Stomach (tissue), 19 donors: ENCODE measurements at regions of chr13 and their contacts with region 1.

Region 1: DNA sequence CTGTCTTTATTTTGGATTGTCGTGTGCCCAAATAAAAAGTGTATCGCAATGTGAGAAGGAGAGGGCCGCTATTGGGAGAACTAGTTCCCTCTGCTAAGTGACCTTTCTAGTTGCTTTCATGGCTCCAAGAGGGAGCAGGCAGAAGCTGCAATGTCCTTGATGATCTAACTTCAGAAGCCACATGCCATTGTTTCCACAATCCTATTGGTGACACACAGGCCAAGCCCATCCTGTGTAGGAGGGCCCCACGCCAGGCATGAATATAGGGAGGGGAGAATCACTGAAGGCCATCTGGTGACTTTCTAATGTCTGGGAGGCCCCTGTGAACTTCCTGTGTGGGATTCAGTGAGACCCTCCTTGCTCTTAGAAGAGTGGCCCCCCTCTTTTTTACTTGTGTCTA is 47.8 kb upstream of the KPNA3 start:
- DNase-seq: peak in 1 of 2 donors; percentile 17
- H3K4me3 ChIP-seq: no peak overlapping the region
- H3K27ac ChIP-seq: no peak overlapping the region
- H3K4me1 ChIP-seq: no peaks in the 10 kb centered on the region
- H3K27me3 ChIP-seq: no peaks in the 10 kb centered on the region
- CTCF ChIP-seq: no peak
- EP300 ChIP-seq: no peak
- POLR2A ChIP-seq: no peak

Region 2: GRCh38 chr13:49388256-49388655 is 452.0 kb before region 1 on chr13:
- intact Hi-C with region 1: no loop called
- DNase-seq: no peak
- H3K4me3 ChIP-seq: no peak overlapping the region
- H3K27ac ChIP-seq: no peak overlapping the region
- H3K4me1 ChIP-seq: no peaks in the 10 kb centered on the region
- H3K27me3 ChIP-seq: no peaks in the 10 kb centered on the region
- CTCF ChIP-seq: no peak
- EP300 ChIP-seq: no peak
- POLR2A ChIP-seq: no peak

Region 3: DNA sequence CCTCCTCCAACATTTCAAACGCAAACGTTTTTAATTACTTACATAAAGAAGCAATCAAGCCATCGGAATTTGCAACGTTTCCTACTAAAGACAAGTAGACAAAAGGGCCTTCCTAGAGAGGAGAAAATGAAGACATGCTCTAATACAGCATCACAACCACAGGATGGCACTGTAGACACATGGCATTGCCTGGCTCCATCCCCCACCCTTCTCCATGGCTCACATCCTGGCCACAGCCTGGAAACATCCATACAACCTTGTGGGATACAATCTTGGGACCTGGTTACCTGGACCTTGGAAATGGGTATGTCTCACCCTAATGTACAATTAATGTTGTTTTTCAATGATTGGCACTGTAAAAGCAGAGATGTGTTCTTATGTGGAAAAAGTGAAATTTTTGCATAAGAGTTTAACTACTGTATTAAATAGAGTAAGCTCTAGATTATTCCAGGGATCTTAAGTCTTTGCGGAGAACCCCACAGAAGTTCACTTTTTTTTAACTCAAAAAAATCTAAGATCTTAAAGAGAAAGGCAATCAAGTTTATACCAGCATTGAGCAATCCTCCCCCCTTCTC is 170.4 kb before region 1 on chr13:
- intact Hi-C with region 1: loop called (anchors 5 kb)
- DNase-seq: peak; percentile 64 to 93
- H3K4me3 ChIP-seq: no peak overlapping the region
- H3K27ac ChIP-seq: no peak overlapping the region
- H3K4me1 ChIP-seq: peaks cover 0 to 21% (median 10%) of the 10 kb centered on the region in 4 donors
- H3K27me3 ChIP-seq: no peaks in the 10 kb centered on the region
- CTCF ChIP-seq: peak in 5 of 7 experiments; percentile 16 to 70 (median 56)
- EP300 ChIP-seq: no peak
- POLR2A ChIP-seq: no peak